CD8-positive, alpha-beta memory T cell (primary cell): ENCODE measurements at regions of chr1 and their contacts with region 1.

Region 1: GRCh38 chr1:160580221-160580812 is 1.0 kb upstream of the CD84 start:
- DNase-seq: no peak
- H3K4me3 ChIP-seq: peak overlapping the region; percentile 25
- H3K4me3 Mint-ChIP-seq: peak overlapping the region; percentile 50 to 76 (median 58)
- H3K27ac ChIP-seq: peak overlapping the region; percentile 17
- H3K27ac Mint-ChIP-seq: peak overlapping the region; percentile 72 to 92 (median 90)
- H3K4me1 ChIP-seq: peaks cover 57% of the 10 kb centered on the region
- H3K4me1 Mint-ChIP-seq: peaks cover 72 to 91% (median 80%) of the 10 kb centered on the region in 3 donors
- H3K27me3 ChIP-seq: no peaks in the 10 kb centered on the region
- H3K27me3 Mint-ChIP-seq: no peaks in the 10 kb centered on the region

Region 2: DNA sequence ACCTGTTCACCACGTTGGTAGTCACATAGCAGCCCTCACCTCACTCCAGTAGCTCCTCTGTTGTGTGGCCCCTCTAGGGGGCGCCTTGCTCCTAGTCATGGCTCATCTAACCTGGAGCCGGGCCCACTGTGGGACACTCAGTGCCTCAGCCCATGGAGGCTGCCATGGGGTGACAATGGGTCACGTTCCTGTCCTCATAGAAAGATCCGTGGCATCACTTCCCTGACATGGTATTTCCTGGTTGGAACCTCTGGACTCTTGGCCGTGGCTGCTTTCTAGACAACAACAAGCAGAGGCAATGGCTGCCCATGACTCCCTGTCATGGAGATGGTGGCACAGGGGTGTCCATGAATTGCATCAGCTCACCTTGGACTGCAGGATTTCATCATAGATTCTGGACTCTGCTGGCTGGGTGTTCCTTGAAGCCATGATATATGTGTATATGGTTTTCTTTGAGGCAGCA is 29.7 kb before region 1 on chr1:
- CTCF ChIA-PET with region 1: interaction called, 10 read pairs
- POLR2A ChIA-PET with region 1: interaction called, 3 read pairs
- DNase-seq: peak; percentile 31 to 77 (median 39)
- H3K4me3 ChIP-seq: no peak overlapping the region
- H3K4me3 Mint-ChIP-seq: no peak overlapping the region
- H3K27ac ChIP-seq: no peak overlapping the region
- H3K27ac Mint-ChIP-seq: peak overlapping the region in 7 of 8 donors; percentile 21 to 86 (median 40)
- H3K4me1 ChIP-seq: peaks cover 6% of the 10 kb centered on the region
- H3K4me1 Mint-ChIP-seq: peaks cover 43 to 81% (median 72%) of the 10 kb centered on the region in 3 donors
- H3K27me3 ChIP-seq: no peaks in the 10 kb centered on the region
- H3K27me3 Mint-ChIP-seq: peaks cover 0 to 1% of the 10 kb centered on the region in 2 donors